ENCODE measurements at regions of chr18 and their contacts with region 1.

Region 1: GRCh38 chr18:31101183-31102024 is 817 bp downstream of the DSC2 start:
- DNase-seq: peak; percentile 37
- ATAC-seq: peak; percentile 89
- H3K4me3 ChIP-seq: peak overlapping the region; percentile 79 to 90 (median 90)
- H3K27ac ChIP-seq: peak overlapping the region; percentile 97
- H3K4me1 ChIP-seq: peaks cover 31% of the 10 kb centered on the region
- H3K27me3 ChIP-seq: no peaks in the 10 kb centered on the region; a peak in 1 of 5 replicates
- CTCF ChIP-seq: peak; percentile 63
- EP300 ChIP-seq: no peak
- POLR2A ChIP-seq: peak; percentile 67 to 72
- RAD21 ChIP-seq: no peak

Region 2: GRCh38 chr18:31042437-31043181 is 58.8 kb before region 1 on chr18 and contains the start of gene DSC3:
- CTCF ChIA-PET with region 1: no interaction called
- POLR2A ChIA-PET with region 1: no interaction called
- in situ Hi-C with region 1: no loop called
- intact Hi-C with region 1: loop called (anchors 10 kb)
- DNase-seq: no peak
- ATAC-seq: peak; percentile 92
- H3K4me3 ChIP-seq: peak within 1 kb of the TSS; percentile 43 to 73 (median 56)
- H3K27ac ChIP-seq: no peak within 1 kb of the TSS
- H3K4me1 ChIP-seq: peaks cover 16% of the 10 kb centered on the region
- H3K27me3 ChIP-seq: peaks cover 0 to 15% of the 10 kb centered on the region in 2 experiments; a peak in 4 of 5 replicates
- CTCF ChIP-seq: no peak
- EP300 ChIP-seq: no peak
- POLR2A ChIP-seq: no peak
- RAD21 ChIP-seq: no peak
- total RNA-seq, gene DSC3: 0.21 and 0.38 TPM in 2 replicates

Region 3: GRCh38 chr18:31241900-31242409 is 140.6 kb after region 1 on chr18:
- CTCF ChIA-PET with region 1: interaction called, 3 read pairs
- POLR2A ChIA-PET with region 1: interaction called, 50 read pairs
- in situ Hi-C with region 1: loop called (anchors 5 kb)
- intact Hi-C with region 1: loop called (anchors 1 kb)
- DNase-seq: peak; percentile 98
- ATAC-seq: peak; percentile 86
- H3K4me3 ChIP-seq: no peak overlapping the region
- H3K27ac ChIP-seq: peak overlapping the region; percentile 94
- H3K4me1 ChIP-seq: peaks cover 61% of the 10 kb centered on the region
- H3K27me3 ChIP-seq: no peaks in the 10 kb centered on the region
- CTCF ChIP-seq: peak; percentile 82
- EP300 ChIP-seq: peak; percentile 29 to 94; a peak in 2 of 4 replicates
- POLR2A ChIP-seq: no peak
- RAD21 ChIP-seq: peak; percentile 80

Region 4: GRCh38 chr18:31399306-31400032 is 298.1 kb after region 1 on chr18:
- CTCF ChIA-PET with region 1: no interaction called
- POLR2A ChIA-PET with region 1: interaction called, 10 read pairs
- in situ Hi-C with region 1: no loop called
- intact Hi-C with region 1: loop called (anchors 2 kb)
- DNase-seq: peak; percentile 55
- ATAC-seq: no peak
- H3K4me3 ChIP-seq: no peak overlapping the region
- H3K27ac ChIP-seq: peak overlapping the region; percentile 93
- H3K4me1 ChIP-seq: peaks cover 92% of the 10 kb centered on the region
- H3K27me3 ChIP-seq: no peaks in the 10 kb centered on the region
- CTCF ChIP-seq: no peak
- EP300 ChIP-seq: peak in 1 of 2 experiments; percentile 79; a peak in 2 of 4 replicates
- POLR2A ChIP-seq: no peak
- RAD21 ChIP-seq: no peak

Region 5: DNA sequence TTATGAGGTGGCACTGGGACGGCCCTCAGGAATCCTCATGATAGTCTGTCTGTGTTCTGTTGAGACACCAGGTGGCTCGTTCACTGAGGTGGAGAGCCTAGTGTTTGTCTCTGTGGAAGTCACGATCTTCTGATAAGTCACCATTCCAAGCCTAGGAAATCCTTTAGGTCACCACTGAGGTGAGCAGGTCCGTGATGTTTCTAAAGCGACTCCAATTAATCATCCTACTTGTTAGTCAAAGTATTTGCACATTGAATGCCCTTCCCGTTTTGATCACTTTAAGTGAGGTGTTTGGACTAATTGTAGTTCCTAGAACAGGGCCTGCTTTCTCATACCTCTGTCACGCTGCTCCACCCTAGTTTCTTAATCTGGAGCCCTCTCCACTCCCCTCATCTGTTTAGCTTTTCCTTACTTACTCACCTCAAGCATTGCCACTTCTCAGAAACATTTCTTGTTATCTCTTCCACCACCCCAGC is 318.1 kb after region 1 on chr18:
- CTCF ChIA-PET with region 1: no interaction called
- POLR2A ChIA-PET with region 1: no interaction called
- in situ Hi-C with region 1: no loop called
- intact Hi-C with region 1: no loop called
- DNase-seq: no peak
- ATAC-seq: peak; percentile 80
- H3K4me3 ChIP-seq: no peak overlapping the region
- H3K27ac ChIP-seq: no peak overlapping the region
- H3K4me1 ChIP-seq: peaks cover 8% of the 10 kb centered on the region; the same call in 1 of the 2 replicates
- H3K27me3 ChIP-seq: no peaks in the 10 kb centered on the region
- CTCF ChIP-seq: no peak
- EP300 ChIP-seq: no peak
- POLR2A ChIP-seq: no peak
- RAD21 ChIP-seq: no peak

Region 6: DNA sequence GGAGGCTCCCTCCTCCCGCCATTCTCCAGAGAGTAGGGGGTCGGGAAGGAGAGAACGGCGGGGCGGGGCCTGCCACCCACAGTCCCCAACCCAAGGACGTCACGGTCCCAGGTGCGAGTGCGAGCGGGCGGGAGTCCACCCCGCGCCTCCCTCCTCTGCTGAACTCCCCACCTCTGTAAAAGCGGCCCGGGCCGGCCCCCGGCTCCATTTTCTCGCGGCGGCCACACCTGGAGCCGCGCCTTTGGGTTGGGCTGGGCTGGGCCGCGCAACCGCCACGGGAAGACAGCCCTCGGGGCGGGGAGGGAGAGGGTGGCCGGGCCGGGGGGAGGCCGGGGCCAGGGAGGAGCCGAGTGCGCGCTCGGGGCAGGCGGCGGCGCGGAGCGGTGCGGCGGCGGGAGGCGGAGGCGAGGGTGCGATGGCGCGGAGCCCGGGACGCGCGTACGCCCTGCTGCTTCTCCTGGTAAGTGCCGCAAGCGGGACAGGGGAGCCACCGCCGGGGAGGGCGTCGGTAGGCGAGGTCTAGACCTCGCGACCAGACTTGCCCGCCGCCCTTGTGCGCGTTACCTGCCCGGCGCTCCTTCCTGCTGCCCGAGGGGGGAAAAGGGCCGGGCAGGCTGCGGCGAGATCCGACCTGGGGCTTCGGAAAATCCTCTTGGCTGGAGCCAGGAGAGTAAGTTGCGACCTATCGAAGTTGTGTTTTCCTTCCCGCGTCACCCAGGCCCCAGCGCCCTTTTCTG is 396.6 kb after region 1 on chr18 and contains the start of gene DSG2:
- CTCF ChIA-PET with region 1: no interaction called
- POLR2A ChIA-PET with region 1: interaction called, 3 read pairs
- in situ Hi-C with region 1: no loop called
- intact Hi-C with region 1: loop called (anchors 5 kb)
- DNase-seq: peak; percentile 43
- ATAC-seq: peak; percentile 90
- H3K4me3 ChIP-seq: peak within 1 kb of the TSS; percentile 94 to 100 (median 99)
- H3K27ac ChIP-seq: peak within 1 kb of the TSS; percentile 82
- H3K4me1 ChIP-seq: peaks cover 27% of the 10 kb centered on the region
- H3K27me3 ChIP-seq: no peaks in the 10 kb centered on the region; a peak in 1 of 5 replicates
- CTCF ChIP-seq: no peak
- EP300 ChIP-seq: no peak
- POLR2A ChIP-seq: peak; percentile 58 to 70
- RAD21 ChIP-seq: no peak
- total RNA-seq, gene DSG2: 23.3 and 24.4 TPM in 2 replicates

Measured in HepG2 (cell line).